Body of pancreas (tissue), 4 donors: ENCODE measurements at regions of chr20 and their contacts with region 1.

Region 1: DNA sequence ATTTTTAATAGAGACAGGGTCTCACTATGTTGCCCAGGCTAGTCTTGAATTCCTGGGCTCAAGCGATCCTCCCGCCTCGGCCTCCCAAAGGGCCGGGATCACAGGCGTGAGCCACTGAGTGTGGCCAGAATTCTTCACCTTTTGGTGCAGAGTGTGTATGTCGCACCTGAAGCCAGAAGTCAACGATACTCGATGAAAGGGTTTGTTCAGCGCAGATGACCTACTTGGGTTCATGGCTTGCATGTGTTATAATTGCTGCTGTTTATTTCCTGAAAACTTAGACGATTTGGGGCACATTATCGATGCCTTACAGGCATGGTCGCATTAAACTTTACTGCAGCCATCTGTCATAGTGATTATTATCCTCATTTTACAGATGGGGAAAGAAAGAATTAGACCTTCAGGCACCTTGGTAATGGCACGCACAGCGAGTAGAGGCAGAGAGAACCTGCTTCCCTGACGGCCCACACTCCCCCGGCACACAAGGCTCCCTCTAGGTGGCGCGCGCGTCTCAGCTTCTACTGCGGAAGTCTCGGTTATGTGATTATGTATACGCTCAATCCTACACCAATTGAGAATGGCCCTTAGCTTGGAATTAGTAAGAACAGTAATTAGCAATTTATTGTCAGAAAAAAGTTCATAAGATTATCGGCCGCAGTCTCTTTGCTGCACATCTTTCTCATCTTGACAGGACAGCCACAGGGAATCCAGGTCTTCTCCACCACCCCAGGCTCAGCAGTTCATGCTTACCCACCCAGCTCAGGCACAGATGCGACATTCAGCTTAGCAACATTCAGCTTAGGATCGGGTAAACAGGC is 212.8 kb upstream of the PROKR2 start:
- DNase-seq: peak; percentile 83 to 91 (median 87)
- ATAC-seq: peak; percentile 89
- H3K4me3 ChIP-seq: no peak overlapping the region
- H3K27ac ChIP-seq: peak overlapping the region in 1 of 4 donors; percentile 0
- H3K4me1 ChIP-seq: peaks cover 8% of the 10 kb centered on the region
- H3K27me3 ChIP-seq: no peaks in the 10 kb centered on the region
- CTCF ChIP-seq: peak; percentile 55 to 87 (median 77)
- POLR2A ChIP-seq: no peak

Region 2: GRCh38 chr20:5100684-5101347 is 428.7 kb before region 1 on chr20:
- intact Hi-C with region 1: no loop called
- DNase-seq: peak; percentile 73 to 84 (median 78)
- ATAC-seq: peak; percentile 81
- H3K4me3 ChIP-seq: no peak overlapping the region
- H3K27ac ChIP-seq: no peak overlapping the region
- H3K4me1 ChIP-seq: no peaks in the 10 kb centered on the region
- H3K27me3 ChIP-seq: no peaks in the 10 kb centered on the region
- CTCF ChIP-seq: peak; percentile 65 to 85 (median 82)
- POLR2A ChIP-seq: no peak

Region 3: GRCh38 chr20:5797843-5798462 is 268.4 kb after region 1 on chr20:
- intact Hi-C with region 1: loop called (anchors 10 kb)
- DNase-seq: no peak
- ATAC-seq: no peak
- H3K4me3 ChIP-seq: no peak overlapping the region
- H3K27ac ChIP-seq: peak overlapping the region; percentile 7 to 70 (median 40)
- H3K4me1 ChIP-seq: peaks cover 25% of the 10 kb centered on the region
- H3K27me3 ChIP-seq: no peaks in the 10 kb centered on the region
- CTCF ChIP-seq: no peak
- POLR2A ChIP-seq: no peak

Region 4: DNA sequence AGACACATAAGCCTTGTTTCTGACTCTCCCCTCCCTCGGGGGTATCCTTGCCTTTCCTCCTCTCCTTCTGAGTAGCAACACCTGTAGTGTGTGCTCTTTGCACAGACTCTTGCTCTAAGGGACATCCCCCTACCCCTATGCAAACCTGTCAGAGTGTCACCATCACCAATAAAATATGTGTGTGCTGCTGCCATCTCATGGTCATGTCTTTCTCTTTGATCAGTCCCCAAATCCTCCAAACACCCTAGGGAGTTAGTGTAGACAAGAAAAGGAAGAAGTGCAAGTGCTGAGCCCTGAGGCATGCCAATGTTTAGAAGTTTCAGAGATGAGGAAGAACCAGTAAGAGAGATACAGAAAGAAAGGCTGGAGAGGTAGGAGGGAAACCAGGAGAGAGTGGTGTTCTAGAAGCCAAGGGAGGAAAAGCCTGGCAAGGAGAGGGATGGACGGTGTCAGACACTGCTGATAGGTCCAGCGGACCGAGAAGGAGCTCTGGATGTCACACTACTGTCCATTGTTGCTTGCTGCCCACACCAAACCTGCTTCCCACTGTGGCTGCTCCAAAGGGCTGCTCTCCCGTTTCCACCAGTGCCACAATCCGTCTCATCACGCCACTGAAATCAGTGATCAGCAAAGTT is 404.4 kb after region 1 on chr20:
- intact Hi-C with region 1: loop called (anchors 10 kb)
- DNase-seq: peak in 1 of 4 donors; percentile 10
- ATAC-seq: no peak
- H3K4me3 ChIP-seq: no peak overlapping the region
- H3K27ac ChIP-seq: no peak overlapping the region
- H3K4me1 ChIP-seq: no peaks in the 10 kb centered on the region
- H3K27me3 ChIP-seq: no peaks in the 10 kb centered on the region
- CTCF ChIP-seq: peak in 3 of 7 experiments; percentile 43 to 46 (median 46)
- POLR2A ChIP-seq: no peak

Region 5: GRCh38 chr20:6075428-6076219 is 546.1 kb after region 1 on chr20:
- intact Hi-C with region 1: loop called (anchors 5 kb)
- DNase-seq: peak in 2 of 4 donors; percentile 19 to 59
- ATAC-seq: peak; percentile 48
- H3K4me3 ChIP-seq: no peak overlapping the region
- H3K27ac ChIP-seq: peak overlapping the region in 1 of 4 donors; percentile 9
- H3K4me1 ChIP-seq: peaks cover 27% of the 10 kb centered on the region
- H3K27me3 ChIP-seq: no peaks in the 10 kb centered on the region
- CTCF ChIP-seq: no peak
- POLR2A ChIP-seq: no peak